ENCODE measurements at regions of chr5 and their contacts with region 1.

Region 1: GRCh38 chr5:159100025-159100781 is 487 bp upstream of the EBF1 start:
- DNase-seq: peak; percentile 87
- H3K4me3 ChIP-seq: peak overlapping the region; percentile 26 to 67 (median 38)
- H3K27ac ChIP-seq: no peak overlapping the region
- H3K4me1 ChIP-seq: peaks cover 12% of the 10 kb centered on the region
- H3K27me3 ChIP-seq: peaks cover 65 to 70% of the 10 kb centered on the region in 2 experiments
- CTCF ChIP-seq: no peak
- POLR2A ChIP-seq: no peak

Region 2: DNA sequence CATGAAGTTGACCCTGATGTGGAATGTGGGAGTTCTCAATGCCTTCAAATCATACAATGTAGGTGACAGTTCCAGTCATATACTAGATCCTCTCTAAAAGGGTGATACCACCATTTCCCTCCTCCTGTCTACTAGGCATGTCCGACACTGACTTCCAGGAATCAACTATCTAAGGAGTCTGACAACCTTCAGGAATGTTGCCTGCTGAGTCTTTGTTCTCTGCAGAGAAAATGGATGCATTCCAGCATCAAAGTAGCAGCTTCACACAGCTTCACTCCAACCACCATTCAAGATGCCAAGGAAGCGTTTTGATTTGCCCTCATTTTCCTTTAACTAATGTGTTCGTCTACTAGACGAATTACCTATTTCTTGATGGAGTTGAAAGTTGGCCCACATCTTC is 530.7 kb before region 1 on chr5:
- CTCF ChIA-PET with region 1: no interaction called
- POLR2A ChIA-PET with region 1: no interaction called
- dilution Hi-C with region 1: no loop called
- intact Hi-C with region 1: no loop called
- DNase-seq: no peak
- H3K4me3 ChIP-seq: no peak overlapping the region
- H3K27ac ChIP-seq: no peak overlapping the region
- H3K4me1 ChIP-seq: no peaks in the 10 kb centered on the region
- H3K27me3 ChIP-seq: no peaks in the 10 kb centered on the region
- CTCF ChIP-seq: no peak
- POLR2A ChIP-seq: no peak

Region 3: DNA sequence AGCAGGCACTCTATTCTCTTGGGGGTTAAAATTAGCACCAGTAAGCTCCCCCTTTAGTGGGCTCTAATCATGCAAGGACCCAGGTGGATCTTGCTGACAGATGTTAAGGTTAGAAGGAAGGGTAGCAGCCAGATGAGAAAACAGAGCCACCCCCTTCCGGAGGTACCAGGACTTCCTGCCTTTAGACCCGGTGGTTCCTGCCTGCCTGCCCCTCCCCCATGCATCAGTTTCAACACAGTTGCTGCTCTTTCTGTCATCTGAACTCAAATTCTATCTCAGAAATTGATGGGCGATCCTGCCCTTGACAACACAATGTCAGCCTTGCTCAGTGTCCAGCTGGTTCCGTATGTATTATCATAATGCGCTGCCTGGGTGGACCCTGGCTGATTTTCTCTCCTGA is 287.8 kb before region 1 on chr5:
- CTCF ChIA-PET with region 1: no interaction called
- POLR2A ChIA-PET with region 1: no interaction called
- dilution Hi-C with region 1: no loop called
- intact Hi-C with region 1: loop called (anchors 2 kb)
- DNase-seq: peak; percentile 13
- H3K4me3 ChIP-seq: no peak overlapping the region
- H3K27ac ChIP-seq: peak overlapping the region; percentile 17
- H3K4me1 ChIP-seq: peaks cover 13% of the 10 kb centered on the region
- H3K27me3 ChIP-seq: no peaks in the 10 kb centered on the region
- CTCF ChIP-seq: no peak
- POLR2A ChIP-seq: no peak

Region 4: GRCh38 chr5:159010661-159011442 is 89.4 kb before region 1 on chr5:
- CTCF ChIA-PET with region 1: no interaction called
- POLR2A ChIA-PET with region 1: no interaction called
- dilution Hi-C with region 1: no loop called
- intact Hi-C with region 1: loop called (anchors 5 kb)
- DNase-seq: peak; percentile 22
- H3K4me3 ChIP-seq: peak overlapping the region in 1 of 3 experiments; percentile 5
- H3K27ac ChIP-seq: no peak overlapping the region
- H3K4me1 ChIP-seq: peaks cover 12% of the 10 kb centered on the region
- H3K27me3 ChIP-seq: peaks cover 2 to 6% of the 10 kb centered on the region in 2 experiments
- CTCF ChIP-seq: no peak
- POLR2A ChIP-seq: no peak

Region 5: DNA sequence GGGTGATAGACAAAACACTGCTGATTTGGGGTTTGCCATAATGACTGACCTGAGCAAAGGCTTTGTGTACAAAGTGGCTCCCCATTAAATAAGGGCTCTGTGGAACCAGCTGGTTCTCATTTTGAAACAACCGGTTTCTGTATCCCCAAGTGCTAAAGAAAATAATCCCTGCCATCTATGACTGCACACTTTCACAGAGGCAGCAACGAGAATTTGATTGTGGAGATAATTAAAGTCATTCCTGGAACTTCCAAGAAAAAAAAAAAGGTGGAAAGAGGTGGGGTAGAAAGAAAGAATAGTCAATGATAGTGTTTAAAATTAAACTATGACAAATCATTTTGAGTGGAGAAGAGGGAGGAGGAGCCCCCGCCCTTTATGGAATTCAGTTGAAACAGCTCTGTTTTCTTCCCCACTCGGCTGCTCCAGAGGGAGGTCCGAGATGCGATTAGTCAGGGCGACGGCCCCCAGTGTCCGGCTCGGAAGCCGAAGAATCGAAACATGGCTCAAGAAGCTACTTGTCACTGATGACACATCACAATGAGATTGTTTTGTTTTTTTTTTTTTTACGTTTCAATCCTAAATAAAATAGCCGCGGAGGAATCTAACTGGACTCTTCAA is 38.9 kb before region 1 on chr5:
- CTCF ChIA-PET with region 1: no interaction called
- POLR2A ChIA-PET with region 1: no interaction called
- dilution Hi-C with region 1: no loop called
- intact Hi-C with region 1: loop called (anchors 2 kb)
- DNase-seq: peak; percentile 45
- H3K4me3 ChIP-seq: no peak overlapping the region
- H3K27ac ChIP-seq: no peak overlapping the region
- H3K4me1 ChIP-seq: peaks cover 7% of the 10 kb centered on the region
- H3K27me3 ChIP-seq: peaks cover 0 to 2% of the 10 kb centered on the region in 2 experiments
- CTCF ChIP-seq: no peak
- POLR2A ChIP-seq: no peak